ENCODE measurements at regions of chr9 and their contacts with region 1.

Region 1: DNA sequence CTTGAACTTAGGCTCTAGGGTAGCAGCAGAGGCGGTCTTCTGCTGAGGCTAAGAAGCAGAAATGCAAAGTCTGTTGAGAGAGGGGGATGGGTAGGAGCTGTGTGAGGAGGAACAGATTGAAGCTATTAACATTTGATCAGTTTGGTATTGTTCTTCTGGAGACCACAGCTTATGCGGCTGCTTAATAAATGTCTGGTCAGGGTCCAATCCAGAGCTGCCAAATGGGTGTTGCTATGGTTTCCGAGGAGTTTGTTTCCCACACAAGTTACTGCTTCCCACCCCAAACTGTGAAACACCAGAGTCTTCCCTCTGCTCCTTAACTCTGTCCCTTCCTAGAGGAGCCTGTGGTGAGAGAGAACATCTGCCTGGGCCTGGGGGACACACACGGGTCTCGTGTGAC is 142.2 kb upstream of the KLF4 start:
- DNase-seq: no peak
- ATAC-seq: no peak

Region 2: GRCh38 chr9:107615321-107615720 is 16.5 kb before region 1 on chr9:
- intact Hi-C with region 1: loop called (anchors 2 kb)
- DNase-seq: no peak
- ATAC-seq: no peak

Region 3: DNA sequence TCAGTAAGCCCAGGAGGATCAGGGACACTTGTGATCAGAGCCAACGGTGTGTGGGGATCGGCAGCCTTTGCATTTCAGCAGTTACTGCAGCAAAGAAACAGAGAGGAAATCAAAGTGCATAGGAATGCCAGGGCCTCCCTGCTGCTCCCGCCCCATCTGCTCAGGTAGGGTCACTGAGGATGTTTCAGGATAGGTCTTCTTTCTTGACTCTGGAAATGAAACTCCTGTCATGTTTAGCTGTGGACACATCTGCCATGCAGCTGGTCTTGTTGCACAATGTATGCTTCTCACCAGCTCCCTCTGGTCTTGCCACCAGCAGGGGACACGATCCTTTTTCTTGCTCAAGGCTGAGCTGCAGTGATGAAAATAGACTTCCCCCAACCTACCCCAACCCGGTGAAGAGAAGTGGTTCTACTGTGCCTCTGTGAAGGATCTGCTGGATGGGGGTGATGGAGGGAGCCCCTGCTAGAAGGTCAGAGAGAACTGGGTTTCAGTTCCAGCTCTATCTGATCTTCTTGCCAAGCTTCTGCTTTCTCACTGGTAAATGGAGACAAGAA is 43.0 kb after region 1 on chr9:
- intact Hi-C with region 1: no loop called
- DNase-seq: no peak
- ATAC-seq: peak; percentile 63

Region 4: GRCh38 chr9:107856633-107857032 is 224.8 kb after region 1 on chr9:
- intact Hi-C with region 1: no loop called
- DNase-seq: no peak
- ATAC-seq: no peak